ENCODE measurements at regions of chr14 and their contacts with region 1.

Region 1: GRCh38 chr14:63487724-63488123 is 55.5 kb downstream of the PPP2R5E start:
- DNase-seq: no peak
- H3K4me3 ChIP-seq: no peak overlapping the region
- H3K27ac ChIP-seq: no peak overlapping the region
- H3K4me1 ChIP-seq: peaks cover 8% of the 10 kb centered on the region
- H3K27me3 ChIP-seq: no peaks in the 10 kb centered on the region
- CTCF ChIP-seq: no peak

Region 2: GRCh38 chr14:63224196-63224595 is 263.5 kb before region 1 on chr14:
- CTCF ChIA-PET with region 1: no interaction called
- POLR2A ChIA-PET with region 1: no interaction called
- intact Hi-C with region 1: no loop called
- DNase-seq: no peak
- H3K4me3 ChIP-seq: no peak overlapping the region
- H3K27ac ChIP-seq: no peak overlapping the region
- H3K4me1 ChIP-seq: no peaks in the 10 kb centered on the region
- H3K27me3 ChIP-seq: no peaks in the 10 kb centered on the region; the same call in 1 of the 2 replicates
- CTCF ChIP-seq: no peak

Region 3: DNA sequence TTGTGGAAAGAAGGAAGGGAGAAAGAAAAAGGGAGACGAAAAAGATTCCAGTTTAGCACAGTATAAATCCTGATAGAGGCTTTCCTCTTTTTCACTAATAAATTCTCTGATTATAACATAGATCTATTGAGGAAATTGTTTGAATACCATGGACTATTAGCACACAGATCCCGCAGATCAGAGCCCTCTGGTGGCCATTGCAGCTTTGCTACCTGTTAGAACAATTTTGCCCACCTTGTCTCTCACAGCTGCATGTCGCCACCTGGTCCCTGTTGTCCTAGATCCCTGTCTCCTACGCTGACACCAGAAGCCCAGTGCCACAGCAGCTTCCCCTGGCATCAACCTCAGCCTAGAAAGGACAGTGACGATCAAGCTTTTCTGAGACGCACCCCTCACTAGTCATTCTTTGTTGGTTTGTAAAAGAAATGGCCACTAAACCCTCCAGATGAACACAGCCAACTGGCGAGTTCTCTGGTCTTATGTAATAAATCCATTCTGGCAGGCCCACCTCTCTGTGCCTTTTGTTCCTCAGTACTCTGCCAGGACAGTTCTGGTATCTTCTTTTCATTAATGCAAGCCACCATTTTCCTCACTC is 178.9 kb before region 1 on chr14:
- CTCF ChIA-PET with region 1: interaction called, 13 read pairs
- POLR2A ChIA-PET with region 1: no interaction called
- intact Hi-C with region 1: no loop called
- DNase-seq: peak in 1 of 2 experiments; percentile 31
- H3K4me3 ChIP-seq: no peak overlapping the region
- H3K27ac ChIP-seq: no peak overlapping the region
- H3K4me1 ChIP-seq: no peaks in the 10 kb centered on the region
- H3K27me3 ChIP-seq: 0 out of 2 replicates have a peak, but pooled peaks cover 3% of the 10 kb centered on the region
- CTCF ChIP-seq: peak; percentile 73

Region 4: GRCh38 chr14:63392236-63392635 is 95.5 kb before region 1 on chr14:
- CTCF ChIA-PET with region 1: no interaction called
- POLR2A ChIA-PET with region 1: no interaction called
- intact Hi-C with region 1: no loop called
- DNase-seq: no peak
- H3K4me3 ChIP-seq: no peak overlapping the region
- H3K27ac ChIP-seq: no peak overlapping the region
- H3K4me1 ChIP-seq: no peaks in the 10 kb centered on the region
- H3K27me3 ChIP-seq: no peaks in the 10 kb centered on the region
- CTCF ChIP-seq: no peak